CD8-positive, alpha-beta memory T cell (primary cell): ENCODE measurements at regions of chr14 and their contacts with region 1.

Region 1: GRCh38 chr14:75307700-75308379 is 29.2 kb downstream of the FOS start:
- DNase-seq: peak; percentile 43 to 73 (median 60)
- H3K4me3 ChIP-seq: no peak overlapping the region
- H3K4me3 Mint-ChIP-seq: no peak overlapping the region
- H3K27ac ChIP-seq: no peak overlapping the region
- H3K27ac Mint-ChIP-seq: no peak overlapping the region
- H3K4me1 ChIP-seq: peaks cover 6% of the 10 kb centered on the region
- H3K4me1 Mint-ChIP-seq: peaks cover 5 to 11% (median 8%) of the 10 kb centered on the region in 3 donors
- H3K27me3 ChIP-seq: no peaks in the 10 kb centered on the region
- H3K27me3 Mint-ChIP-seq: peaks cover 3 to 4% of the 10 kb centered on the region in 2 donors

Region 2: GRCh38 chr14:75141967-75142366 is 165.9 kb before region 1 on chr14:
- CTCF ChIA-PET with region 1: interaction called, 26 read pairs
- POLR2A ChIA-PET with region 1: no interaction called
- DNase-seq: peak in 3 of 5 donors; percentile 9 to 51 (median 40)
- H3K4me3 ChIP-seq: no peak overlapping the region
- H3K4me3 Mint-ChIP-seq: peak overlapping the region in 1 of 7 donors; percentile 24
- H3K27ac ChIP-seq: no peak overlapping the region
- H3K27ac Mint-ChIP-seq: peak overlapping the region; percentile 38 to 91 (median 80)
- H3K4me1 ChIP-seq: peaks cover 57% of the 10 kb centered on the region
- H3K4me1 Mint-ChIP-seq: peaks cover 55 to 82% (median 79%) of the 10 kb centered on the region in 3 donors
- H3K27me3 ChIP-seq: no peaks in the 10 kb centered on the region
- H3K27me3 Mint-ChIP-seq: no peaks in the 10 kb centered on the region

Region 3: DNA sequence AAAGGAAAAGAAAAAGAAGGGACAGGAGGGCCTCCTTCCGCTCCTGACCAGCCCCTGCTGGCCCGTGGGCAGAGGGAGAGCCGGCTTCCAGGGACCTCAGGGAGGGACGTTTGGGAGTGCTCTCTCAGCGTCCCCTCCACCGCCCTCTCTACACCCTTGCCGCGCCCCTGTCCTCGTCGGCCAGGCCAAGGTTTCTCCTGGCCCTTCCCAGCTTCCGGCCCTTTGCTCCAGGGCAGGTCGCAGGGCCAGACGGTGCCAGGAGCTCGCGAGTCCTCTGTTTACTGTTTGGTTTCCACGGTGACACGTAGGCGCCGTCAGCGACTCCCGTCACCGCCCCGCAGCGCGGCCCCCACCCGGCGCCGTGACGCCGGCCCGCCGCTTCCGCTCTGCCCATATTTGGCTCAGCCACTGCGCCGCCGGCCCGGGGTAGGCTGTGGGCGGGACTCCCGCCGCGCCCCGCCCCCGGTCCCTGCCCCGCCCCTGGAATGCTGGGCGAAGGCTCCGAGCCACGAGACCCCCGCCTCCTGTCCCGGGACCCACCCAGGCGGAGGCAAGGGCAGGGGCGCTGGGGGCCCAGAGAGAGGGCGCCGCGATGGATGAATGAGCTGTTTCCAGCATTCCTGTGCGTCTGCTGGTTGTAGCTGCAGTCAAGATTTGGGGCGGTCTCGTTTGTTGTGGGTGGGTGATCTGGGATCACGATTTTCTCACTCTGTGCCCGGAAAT is 13.8 kb before region 1 on chr14:
- CTCF ChIA-PET with region 1: interaction called, 13 read pairs
- POLR2A ChIA-PET with region 1: no interaction called
- DNase-seq: peak; percentile 91 to 96 (median 95)
- H3K4me3 ChIP-seq: peak overlapping the region; percentile 75
- H3K4me3 Mint-ChIP-seq: peak overlapping the region; percentile 80 to 96 (median 91)
- H3K27ac ChIP-seq: peak overlapping the region; percentile 98
- H3K27ac Mint-ChIP-seq: peak overlapping the region; percentile 87 to 100 (median 98)
- H3K4me1 ChIP-seq: peaks cover 25% of the 10 kb centered on the region
- H3K4me1 Mint-ChIP-seq: peaks cover 22 to 26% (median 22%) of the 10 kb centered on the region in 3 donors
- H3K27me3 ChIP-seq: no peaks in the 10 kb centered on the region
- H3K27me3 Mint-ChIP-seq: peaks cover 0 to 8% of the 10 kb centered on the region in 2 donors

Region 4: DNA sequence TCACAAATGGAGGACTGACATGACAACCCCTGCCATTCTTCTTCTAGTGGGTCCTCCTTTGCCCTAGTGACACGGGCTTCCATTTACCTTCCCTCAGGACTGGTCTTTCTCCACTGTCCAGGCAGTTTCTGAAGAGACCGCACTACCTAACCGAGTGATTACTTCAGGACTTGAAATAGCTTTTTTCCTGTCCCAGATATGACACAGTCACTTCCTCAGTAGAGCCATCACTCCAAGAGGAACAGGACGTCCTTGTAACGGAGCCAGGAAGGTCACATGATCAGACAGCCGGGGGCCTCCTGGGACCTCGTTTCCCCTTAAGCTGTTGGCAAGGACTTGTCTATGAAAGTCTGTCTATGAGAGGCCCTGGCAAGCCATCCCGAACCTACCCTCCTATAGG is 33.1 kb after region 1 on chr14:
- CTCF ChIA-PET with region 1: no interaction called
- POLR2A ChIA-PET with region 1: no interaction called
- DNase-seq: no peak
- H3K4me3 ChIP-seq: no peak overlapping the region
- H3K4me3 Mint-ChIP-seq: no peak overlapping the region
- H3K27ac ChIP-seq: no peak overlapping the region
- H3K27ac Mint-ChIP-seq: no peak overlapping the region
- H3K4me1 ChIP-seq: no peaks in the 10 kb centered on the region
- H3K4me1 Mint-ChIP-seq: no peaks in the 10 kb centered on the region
- H3K27me3 ChIP-seq: no peaks in the 10 kb centered on the region
- H3K27me3 Mint-ChIP-seq: peaks cover 0 to 6% of the 10 kb centered on the region in 2 donors

Region 5: DNA sequence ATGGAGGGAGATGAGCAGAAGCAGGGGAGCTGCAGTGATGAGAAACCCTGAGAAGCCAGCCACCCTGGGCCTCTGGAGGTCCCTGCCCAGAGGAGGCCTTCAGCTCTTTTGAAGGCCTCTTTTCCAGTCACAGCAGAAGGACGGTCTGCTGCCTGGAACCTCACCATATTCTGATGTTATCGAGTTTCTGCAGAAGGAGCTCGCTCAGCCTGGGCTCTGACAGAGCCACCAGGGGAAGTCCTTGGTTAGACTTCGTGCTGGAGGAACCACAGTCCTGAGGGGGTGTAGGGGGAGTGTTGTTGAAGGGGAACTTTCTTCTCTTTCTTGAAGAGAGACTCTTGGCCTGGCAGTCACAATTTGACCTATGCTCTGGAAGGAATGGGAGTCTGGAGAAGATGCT is 189.4 kb after region 1 on chr14:
- CTCF ChIA-PET with region 1: interaction called, 11 read pairs
- POLR2A ChIA-PET with region 1: no interaction called
- DNase-seq: peak in 1 of 5 donors; percentile 59
- H3K4me3 ChIP-seq: no peak overlapping the region
- H3K4me3 Mint-ChIP-seq: peak overlapping the region in 1 of 7 donors; percentile 45
- H3K27ac ChIP-seq: no peak overlapping the region
- H3K27ac Mint-ChIP-seq: peak overlapping the region in 5 of 8 donors; percentile 12 to 97 (median 70)
- H3K4me1 ChIP-seq: peaks cover 7% of the 10 kb centered on the region
- H3K4me1 Mint-ChIP-seq: peaks cover 7 to 35% (median 32%) of the 10 kb centered on the region in 3 donors
- H3K27me3 ChIP-seq: no peaks in the 10 kb centered on the region
- H3K27me3 Mint-ChIP-seq: no peaks in the 10 kb centered on the region